A673 (cell line): ENCODE measurements at regions of chr2 and their contacts with region 1.

Region 1: DNA sequence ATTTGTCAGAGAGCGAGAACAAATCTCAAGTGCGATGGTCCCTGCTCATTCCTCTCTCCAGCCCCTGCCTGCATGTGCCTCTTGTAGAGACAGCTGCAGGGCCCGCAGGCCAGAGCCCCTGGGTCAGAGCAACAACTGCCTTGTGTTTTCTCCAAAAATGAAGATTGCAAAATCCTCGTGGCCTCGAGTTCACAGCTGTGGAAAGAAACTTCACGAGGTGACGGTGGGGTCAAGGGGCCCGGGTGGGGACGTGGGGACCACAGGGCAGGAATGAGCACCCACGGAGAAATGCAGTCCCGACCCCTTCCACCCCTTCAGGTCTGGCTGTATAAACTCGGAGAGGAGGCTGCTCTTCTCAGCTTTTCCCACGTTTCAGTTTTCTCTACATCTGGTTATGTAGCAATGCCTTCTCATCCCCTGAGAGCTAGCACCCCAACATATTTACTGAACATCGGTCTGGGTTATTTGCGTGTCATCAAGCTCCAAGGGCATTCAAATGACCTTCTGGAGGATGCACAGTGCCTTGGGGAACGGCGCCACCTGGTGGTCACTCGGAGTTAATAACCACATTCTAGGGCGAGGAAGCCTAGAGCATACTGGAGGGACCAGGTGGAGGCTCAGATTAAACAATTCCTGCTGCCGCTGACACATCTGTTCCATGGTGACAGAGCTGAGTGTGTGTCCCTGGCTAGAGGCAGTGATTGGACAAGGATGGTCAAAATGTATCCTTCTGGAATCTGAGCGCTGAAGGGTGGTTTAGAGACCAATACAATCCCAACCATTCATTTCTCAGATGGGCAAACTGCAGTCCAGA is 91.4 kb upstream of the CYRIA start:
- DNase-seq: peak; percentile 85
- H3K4me3 ChIP-seq: no peak overlapping the region
- H3K27ac ChIP-seq: peak overlapping the region; percentile 60
- H3K4me1 ChIP-seq: peaks cover 8% of the 10 kb centered on the region
- H3K27me3 ChIP-seq: no peaks in the 10 kb centered on the region
- CTCF ChIP-seq: peak; percentile 93

Region 2: DNA sequence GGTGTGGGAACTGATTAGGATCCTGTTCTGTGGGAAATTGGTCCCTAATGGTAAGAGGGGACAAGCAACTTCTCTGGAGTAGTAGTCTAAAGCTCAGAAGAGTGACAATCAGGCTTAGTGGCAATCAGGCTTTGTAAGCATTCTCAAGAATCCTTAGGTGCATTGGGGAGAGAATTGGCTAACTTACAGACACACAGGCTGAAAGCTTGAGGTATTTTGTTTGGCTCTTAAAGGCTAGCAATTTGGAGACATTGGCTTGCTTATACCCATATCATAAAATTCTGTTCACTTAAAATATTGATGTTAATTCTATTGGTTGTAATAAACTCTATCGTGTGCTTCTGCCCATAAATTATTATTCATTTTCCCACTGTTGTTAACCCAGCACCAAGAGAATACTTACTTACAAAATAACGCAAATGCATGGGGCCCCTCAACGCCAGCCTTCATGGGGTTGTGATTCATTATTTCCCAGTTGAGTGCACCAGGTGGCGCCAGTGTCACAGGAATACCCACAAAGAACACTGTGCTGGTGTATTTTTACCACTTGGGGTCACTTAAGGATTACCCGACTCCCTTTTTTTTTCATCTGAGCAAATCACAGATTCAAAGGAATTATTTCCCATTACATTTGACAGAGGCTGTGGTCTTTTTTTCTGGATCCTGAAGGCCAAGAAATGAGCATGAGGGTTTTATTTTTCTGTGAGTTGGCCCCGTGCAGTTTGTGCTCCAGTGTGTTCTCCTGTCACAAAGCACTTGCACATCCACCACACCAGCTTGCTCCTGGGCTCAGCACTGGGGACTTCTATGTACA is 1119.9 kb before region 1 on chr2:
- CTCF ChIA-PET with region 1: no interaction called
- POLR2A ChIA-PET with region 1: no interaction called
- intact Hi-C with region 1: loop called (anchors 10 kb)
- DNase-seq: peak; percentile 79
- H3K4me3 ChIP-seq: no peak overlapping the region
- H3K27ac ChIP-seq: no peak overlapping the region
- H3K4me1 ChIP-seq: peaks cover 9% of the 10 kb centered on the region
- H3K27me3 ChIP-seq: no peaks in the 10 kb centered on the region
- CTCF ChIP-seq: peak; percentile 92

Region 3: GRCh38 chr2:16525265-16525887 is 231.7 kb before region 1 on chr2:
- CTCF ChIA-PET with region 1: interaction called, 12 read pairs
- POLR2A ChIA-PET with region 1: no interaction called
- intact Hi-C with region 1: loop called (anchors 1 kb)
- DNase-seq: peak; percentile 75
- H3K4me3 ChIP-seq: no peak overlapping the region
- H3K27ac ChIP-seq: no peak overlapping the region
- H3K4me1 ChIP-seq: peaks cover 18% of the 10 kb centered on the region
- H3K27me3 ChIP-seq: no peaks in the 10 kb centered on the region
- CTCF ChIP-seq: peak; percentile 86

Region 4: GRCh38 chr2:16553226-16553625 is 203.8 kb before region 1 on chr2:
- CTCF ChIA-PET with region 1: interaction called, 6 read pairs
- POLR2A ChIA-PET with region 1: no interaction called
- intact Hi-C with region 1: loop called (anchors 1 kb)
- DNase-seq: peak; percentile 78
- H3K4me3 ChIP-seq: no peak overlapping the region
- H3K27ac ChIP-seq: no peak overlapping the region
- H3K4me1 ChIP-seq: peaks cover 4% of the 10 kb centered on the region
- H3K27me3 ChIP-seq: no peaks in the 10 kb centered on the region
- CTCF ChIP-seq: peak; percentile 81

Region 5: GRCh38 chr2:16684676-16685330 is 72.2 kb before region 1 on chr2:
- CTCF ChIA-PET with region 1: no interaction called
- POLR2A ChIA-PET with region 1: no interaction called
- intact Hi-C with region 1: loop called (anchors 1 kb)
- DNase-seq: peak; percentile 79
- H3K4me3 ChIP-seq: peak overlapping the region; percentile 8
- H3K27ac ChIP-seq: peak overlapping the region; percentile 100
- H3K4me1 ChIP-seq: peaks cover 67% of the 10 kb centered on the region
- H3K27me3 ChIP-seq: no peaks in the 10 kb centered on the region
- CTCF ChIP-seq: no peak

Region 6: DNA sequence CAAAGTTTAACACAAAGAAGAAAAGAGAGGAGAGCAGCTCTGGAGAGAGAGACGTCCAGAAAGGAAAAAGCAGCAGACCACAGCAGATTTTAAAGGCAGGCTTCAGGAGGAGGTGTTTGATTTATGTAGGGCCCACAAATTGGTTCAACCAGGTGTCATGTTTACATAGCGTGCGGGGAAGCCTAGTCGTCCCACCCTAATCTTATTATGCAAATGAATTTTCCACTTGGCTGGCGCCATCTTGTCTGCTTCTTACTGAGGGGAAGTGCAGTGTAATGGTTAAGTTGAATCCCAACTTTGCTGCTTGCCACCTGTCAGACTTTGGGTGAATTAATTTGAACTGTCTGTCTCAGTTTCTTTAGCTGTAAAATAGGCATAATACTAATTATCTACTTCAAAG is 191.0 kb after region 1 on chr2:
- CTCF ChIA-PET with region 1: no interaction called
- POLR2A ChIA-PET with region 1: no interaction called
- intact Hi-C with region 1: no loop called
- DNase-seq: no peak
- H3K4me3 ChIP-seq: no peak overlapping the region
- H3K27ac ChIP-seq: no peak overlapping the region
- H3K4me1 ChIP-seq: no peaks in the 10 kb centered on the region
- H3K27me3 ChIP-seq: peaks cover 3% of the 10 kb centered on the region
- CTCF ChIP-seq: no peak